Esophagus muscularis mucosa (tissue), 4 donors: ENCODE measurements at regions of chr11 and their contacts with region 1.

Region 1: GRCh38 chr11:92941676-92942571 is 27.5 kb upstream of the MTNR1B start:
- DNase-seq: no peak
- H3K4me3 ChIP-seq: no peak overlapping the region
- H3K27ac ChIP-seq: no peak overlapping the region
- H3K4me1 ChIP-seq: peaks cover 0 to 5% (median 0%) of the 10 kb centered on the region in 4 donors
- H3K27me3 ChIP-seq: no peaks in the 10 kb centered on the region
- CTCF ChIP-seq: peak; percentile 54 to 64 (median 57)
- EP300 ChIP-seq: no peak
- POLR2A ChIP-seq: no peak

Region 2: DNA sequence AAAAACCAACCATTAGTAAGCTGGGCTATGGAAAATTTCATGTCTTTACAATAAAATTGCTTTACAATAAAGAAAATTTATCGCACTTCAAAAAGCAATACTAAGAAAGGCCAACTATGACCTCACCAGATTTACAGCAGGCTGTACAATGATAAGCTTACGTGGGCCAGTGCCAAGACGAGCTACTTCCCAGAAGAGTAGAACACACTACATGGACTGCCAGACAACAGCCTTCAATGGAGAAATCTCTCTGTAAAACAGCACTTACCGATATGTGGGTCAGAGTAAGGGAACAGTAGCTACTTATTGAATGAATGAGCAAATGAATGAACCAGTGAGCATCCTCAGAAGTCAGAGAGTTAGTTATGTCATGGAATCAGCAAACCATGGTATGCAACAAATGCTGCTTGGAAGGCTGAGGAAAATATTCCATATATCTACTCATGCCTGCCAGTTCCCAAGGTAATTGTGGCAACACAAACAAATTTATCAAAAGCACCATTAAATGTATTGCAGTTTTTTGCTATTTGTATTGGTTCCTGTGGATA is 181.5 kb after region 1 on chr11:
- intact Hi-C with region 1: no loop called
- DNase-seq: no peak
- H3K4me3 ChIP-seq: no peak overlapping the region
- H3K27ac ChIP-seq: no peak overlapping the region
- H3K4me1 ChIP-seq: peaks cover 0 to 4% (median 0%) of the 10 kb centered on the region in 4 donors
- H3K27me3 ChIP-seq: peaks cover 0 to 10% (median 0%) of the 10 kb centered on the region in 4 donors
- CTCF ChIP-seq: no peak
- EP300 ChIP-seq: no peak
- POLR2A ChIP-seq: no peak

Region 3: GRCh38 chr11:93225662-93226061 is 283.7 kb after region 1 on chr11:
- intact Hi-C with region 1: loop called (anchors 10 kb)
- DNase-seq: no peak
- H3K4me3 ChIP-seq: no peak overlapping the region
- H3K27ac ChIP-seq: no peak overlapping the region
- H3K4me1 ChIP-seq: peaks cover 0 to 5% (median 0%) of the 10 kb centered on the region in 4 donors
- H3K27me3 ChIP-seq: no peaks in the 10 kb centered on the region
- CTCF ChIP-seq: peak; percentile 31 to 41 (median 34)
- EP300 ChIP-seq: no peak
- POLR2A ChIP-seq: no peak

Region 4: GRCh38 chr11:93370260-93370659 is 428.3 kb after region 1 on chr11:
- intact Hi-C with region 1: no loop called
- DNase-seq: no peak
- H3K4me3 ChIP-seq: no peak overlapping the region
- H3K27ac ChIP-seq: no peak overlapping the region
- H3K4me1 ChIP-seq: no peaks in the 10 kb centered on the region
- H3K27me3 ChIP-seq: no peaks in the 10 kb centered on the region
- CTCF ChIP-seq: no peak
- EP300 ChIP-seq: no peak
- POLR2A ChIP-seq: no peak